Ascending aorta (tissue), 2 donors: ENCODE measurements at regions of chr14 and their contacts with region 1.

Region 1: GRCh38 chr14:45134051-45134958 is at the start of gene FKBP3:
- DNase-seq: peak; percentile 91 to 98
- H3K4me3 ChIP-seq: peak within 1 kb of the TSS; percentile 72 to 77
- H3K27ac ChIP-seq: peak within 1 kb of the TSS; percentile 78 to 91
- H3K4me1 ChIP-seq: peaks cover 2 to 23% of the 10 kb centered on the region in 2 donors
- H3K27me3 ChIP-seq: no peaks in the 10 kb centered on the region
- CTCF ChIP-seq: no peak
- total RNA-seq, gene FKBP3: 8.8 TPM

Region 2: DNA sequence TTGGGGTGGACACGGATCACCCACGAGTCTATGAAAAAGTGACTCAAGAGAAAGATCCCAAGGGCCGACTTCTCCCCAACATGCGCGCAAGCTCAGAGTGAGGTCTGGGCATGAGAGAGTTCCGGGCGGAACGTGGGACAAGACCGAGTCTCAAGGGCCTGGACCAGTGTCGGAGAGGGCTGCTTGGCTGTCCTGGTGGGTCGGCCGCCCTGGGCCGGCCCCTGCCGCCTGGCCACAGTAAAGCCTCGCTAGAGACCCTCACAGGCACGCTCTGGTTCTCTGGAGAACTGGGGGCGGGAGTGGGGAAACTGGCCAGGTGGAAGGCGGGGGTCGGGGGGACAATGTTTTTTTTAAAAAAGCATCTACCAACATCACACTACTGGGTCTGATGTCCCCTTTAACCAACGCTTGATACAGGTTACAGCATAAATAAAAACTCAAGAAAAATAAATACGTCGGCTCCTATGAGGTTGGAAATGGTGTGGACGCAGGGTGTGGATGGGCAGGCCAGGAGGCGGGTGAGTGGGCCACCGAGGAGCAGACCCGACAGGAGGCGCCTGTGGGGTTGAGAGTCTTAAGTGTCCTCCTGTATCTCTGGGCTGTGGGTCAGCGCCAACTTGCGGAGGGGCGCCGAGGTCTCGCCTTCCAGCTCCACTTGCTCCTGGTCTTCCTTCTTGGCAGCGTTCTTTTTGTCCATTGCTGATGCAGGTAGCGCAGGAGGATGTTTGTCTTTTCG is 247.3 kb before region 1 on chr14:
- intact Hi-C with region 1: no loop called
- DNase-seq: no peak
- H3K4me3 ChIP-seq: no peak overlapping the region
- H3K27ac ChIP-seq: no peak overlapping the region
- H3K4me1 ChIP-seq: no peaks in the 10 kb centered on the region
- H3K27me3 ChIP-seq: no peaks in the 10 kb centered on the region
- CTCF ChIP-seq: no peak

Region 3: GRCh38 chr14:45083971-45084722 is 50.2 kb before region 1 on chr14 and contains the start of gene PRPF39:
- intact Hi-C with region 1: loop called (anchors 1 kb)
- DNase-seq: peak; percentile 72 to 96
- H3K4me3 ChIP-seq: peak within 1 kb of the TSS; percentile 83 to 94
- H3K27ac ChIP-seq: peak within 1 kb of the TSS; percentile 71 to 80
- H3K4me1 ChIP-seq: peaks cover 0 to 14% of the 10 kb centered on the region in 2 donors
- H3K27me3 ChIP-seq: no peaks in the 10 kb centered on the region
- CTCF ChIP-seq: no peak
- total RNA-seq, gene PRPF39: 43.2 TPM

Region 4: DNA sequence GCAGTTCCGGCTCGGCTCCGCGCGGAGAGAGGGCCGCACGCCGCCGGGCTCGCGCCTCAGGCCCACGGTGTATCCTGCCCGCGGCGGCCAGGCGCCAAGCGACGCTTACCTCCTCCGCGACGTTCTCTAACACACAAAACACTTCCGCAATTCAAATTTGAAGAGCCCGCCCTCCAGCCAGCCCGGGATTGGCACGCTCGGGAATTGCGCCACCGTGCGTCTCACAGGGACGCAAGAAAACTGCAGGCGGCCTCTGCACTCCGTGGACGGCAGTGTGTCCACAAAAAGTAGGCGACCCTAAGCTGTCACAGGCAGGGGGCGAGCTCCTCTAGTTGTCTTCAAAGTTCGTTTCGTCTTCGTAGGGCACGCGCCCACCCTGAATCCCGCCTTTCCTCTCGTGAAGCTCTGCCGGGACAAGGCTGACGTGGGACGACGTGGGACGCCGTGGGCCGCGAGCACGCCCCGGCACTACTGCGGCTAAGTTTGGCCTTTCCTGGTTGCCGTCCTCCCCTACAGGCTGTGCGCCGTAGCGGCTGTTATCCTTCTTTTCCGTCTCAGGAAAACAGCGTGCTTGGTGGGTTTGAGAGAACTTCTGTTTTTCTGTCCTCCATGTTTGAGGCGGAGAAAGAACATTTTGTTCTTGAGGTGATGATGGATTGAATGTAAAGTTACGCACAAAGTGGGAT is 118.9 kb after region 1 on chr14 and contains the start of gene MIS18BP1:
- intact Hi-C with region 1: loop called (anchors 2 kb)
- DNase-seq: peak; percentile 81 to 97
- H3K4me3 ChIP-seq: peak within 1 kb of the TSS; percentile 66 to 76
- H3K27ac ChIP-seq: peak within 1 kb of the TSS; percentile 85 to 87
- H3K4me1 ChIP-seq: peaks cover 0 to 9% of the 10 kb centered on the region in 2 donors
- H3K27me3 ChIP-seq: no peaks in the 10 kb centered on the region
- CTCF ChIP-seq: peak; percentile 62 to 74 (median 71)
- total RNA-seq, gene MIS18BP1: 35.9 TPM

Region 5: GRCh38 chr14:45267071-45267470 is 132.8 kb after region 1 on chr14:
- intact Hi-C with region 1: loop called (anchors 5 kb)
- DNase-seq: no peak
- H3K4me3 ChIP-seq: no peak overlapping the region
- H3K27ac ChIP-seq: peak overlapping the region in 1 of 2 donors; percentile 22
- H3K4me1 ChIP-seq: no peaks in the 10 kb centered on the region
- H3K27me3 ChIP-seq: no peaks in the 10 kb centered on the region
- CTCF ChIP-seq: no peak

Region 6: GRCh38 chr14:45308745-45309397 is 174.6 kb after region 1 on chr14:
- intact Hi-C with region 1: no loop called
- DNase-seq: no peak
- H3K4me3 ChIP-seq: no peak overlapping the region
- H3K27ac ChIP-seq: no peak overlapping the region
- H3K4me1 ChIP-seq: no peaks in the 10 kb centered on the region
- H3K27me3 ChIP-seq: no peaks in the 10 kb centered on the region
- CTCF ChIP-seq: no peak